Endothelial cell of umbilical vein (primary cell): ENCODE measurements at regions of chr9 and their contacts with region 1.

Region 1: DNA sequence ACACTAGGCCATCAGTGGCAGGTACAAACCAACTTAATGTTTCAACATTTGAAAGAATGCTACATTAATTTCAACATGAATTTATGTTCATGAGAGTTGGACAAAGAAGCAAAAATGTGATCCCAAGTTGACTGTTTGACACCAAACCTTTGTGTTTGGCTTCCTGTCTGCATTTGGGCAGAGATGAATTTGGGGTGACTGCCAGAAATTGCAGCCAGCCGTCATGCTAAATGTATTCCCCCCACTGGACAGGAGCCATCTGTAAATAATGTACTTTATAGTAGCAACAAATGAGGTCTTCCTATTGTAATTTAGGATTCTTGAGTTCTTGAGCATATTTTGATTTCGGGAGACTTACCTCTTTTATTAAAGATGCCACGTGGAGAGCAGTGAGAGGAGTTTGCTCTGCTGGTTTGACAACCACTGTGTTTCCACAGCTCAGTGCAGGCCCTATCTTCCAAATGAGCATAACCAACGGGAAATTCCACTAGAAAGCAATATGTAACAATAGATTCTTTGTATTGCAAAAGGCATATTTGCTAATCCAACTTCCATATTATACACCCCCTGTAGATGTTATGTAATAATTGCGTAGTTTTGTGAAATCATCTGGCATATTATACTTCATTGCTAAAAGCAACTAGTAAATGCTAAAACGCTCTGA is 27.6 kb downstream of the ALDH1A1 start:
- DNase-seq: peak; percentile 91
- H3K4me3 ChIP-seq: no peak overlapping the region
- H3K27ac ChIP-seq: peak overlapping the region; percentile 57
- H3K4me1 ChIP-seq: peaks cover 16% of the 10 kb centered on the region
- H3K27me3 ChIP-seq: no peaks in the 10 kb centered on the region
- CTCF ChIP-seq: no peak
- POLR2A ChIP-seq: no peak

Region 2: GRCh38 chr9:72907421-72907820 is 17.8 kb before region 1 on chr9:
- CTCF ChIA-PET with region 1: no interaction called
- POLR2A ChIA-PET with region 1: no interaction called
- dilution Hi-C with region 1: no loop called
- intact Hi-C with region 1: loop called (anchors 2 kb)
- DNase-seq: peak; percentile 74
- H3K4me3 ChIP-seq: no peak overlapping the region
- H3K27ac ChIP-seq: no peak overlapping the region
- H3K4me1 ChIP-seq: no peaks in the 10 kb centered on the region
- H3K27me3 ChIP-seq: no peaks in the 10 kb centered on the region
- CTCF ChIP-seq: no peak
- POLR2A ChIP-seq: no peak

Region 3: DNA sequence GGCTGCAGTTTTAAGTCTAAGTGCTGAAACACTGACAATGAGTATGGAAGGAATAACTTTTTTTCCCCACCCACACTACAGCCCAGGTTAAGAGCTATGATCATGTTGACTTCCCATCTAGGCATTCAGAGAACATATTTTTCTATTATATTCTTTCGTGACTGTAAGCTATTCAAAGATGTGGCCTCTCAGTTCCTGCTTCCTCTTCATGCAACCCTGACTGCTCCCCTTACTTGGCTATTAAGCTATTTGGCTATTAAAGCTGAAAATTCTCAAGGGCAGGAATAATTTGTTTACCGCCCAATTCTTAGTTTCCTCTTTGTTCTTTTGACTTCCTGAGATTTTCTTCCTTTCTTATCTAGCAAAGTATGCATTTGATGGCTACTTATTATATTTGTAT is 46.2 kb after region 1 on chr9:
- CTCF ChIA-PET with region 1: no interaction called
- POLR2A ChIA-PET with region 1: no interaction called
- dilution Hi-C with region 1: no loop called
- intact Hi-C with region 1: loop called (anchors 2 kb)
- DNase-seq: peak; percentile 87
- H3K4me3 ChIP-seq: no peak overlapping the region
- H3K27ac ChIP-seq: peak overlapping the region; percentile 72
- H3K4me1 ChIP-seq: peaks cover 18% of the 10 kb centered on the region
- H3K27me3 ChIP-seq: no peaks in the 10 kb centered on the region
- CTCF ChIP-seq: no peak
- POLR2A ChIP-seq: no peak

Region 4: DNA sequence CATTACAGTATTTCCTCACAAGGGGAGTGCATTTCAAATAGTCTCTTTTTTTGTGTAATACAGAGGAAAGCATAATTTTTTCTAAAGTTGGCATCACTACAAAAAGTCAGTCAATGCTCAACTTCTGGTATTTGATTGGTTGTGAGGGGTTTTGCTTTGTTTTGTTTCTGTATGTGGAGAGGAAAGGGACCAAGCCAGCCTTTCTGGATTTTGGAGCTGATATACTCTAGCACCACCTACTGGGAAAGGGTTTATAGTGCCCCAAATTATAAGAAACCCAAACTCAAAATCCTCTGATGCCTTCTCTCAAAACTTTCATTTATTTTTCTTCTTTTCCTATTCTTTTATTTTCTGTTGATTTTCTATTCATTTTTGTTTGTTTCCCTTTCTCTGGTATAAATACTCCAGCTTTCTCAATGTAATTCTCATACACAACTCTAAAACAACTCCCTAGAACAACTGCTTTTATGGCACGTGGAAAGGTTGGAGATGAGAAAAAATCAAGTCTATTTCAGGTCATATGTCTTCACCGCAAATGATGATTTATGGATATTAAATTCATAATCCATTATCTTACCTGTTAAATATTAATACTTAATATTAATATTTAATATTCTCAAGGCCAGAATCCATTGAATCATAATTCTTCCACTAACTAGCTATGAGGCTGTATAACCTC is 156.9 kb after region 1 on chr9:
- CTCF ChIA-PET with region 1: no interaction called
- POLR2A ChIA-PET with region 1: no interaction called
- dilution Hi-C with region 1: no loop called
- intact Hi-C with region 1: loop called (anchors 2 kb)
- DNase-seq: peak; percentile 90
- H3K4me3 ChIP-seq: no peak overlapping the region
- H3K27ac ChIP-seq: no peak overlapping the region
- H3K4me1 ChIP-seq: peaks cover 2% of the 10 kb centered on the region
- H3K27me3 ChIP-seq: no peaks in the 10 kb centered on the region
- CTCF ChIP-seq: peak; percentile 61 to 74
- POLR2A ChIP-seq: no peak